H1 (cell line): ENCODE measurements at regions of chr7 and their contacts with region 1.

Region 1: GRCh38 chr7:24741691-24742504 is 15.4 kb downstream of the GSDME start:
- DNase-seq: no peak
- H3K4me3 ChIP-seq: no peak overlapping the region
- H3K27ac ChIP-seq: no peak overlapping the region
- H3K4me1 ChIP-seq: no peaks in the 10 kb centered on the region
- H3K27me3 ChIP-seq: no peaks in the 10 kb centered on the region
- CTCF ChIP-seq: no peak
- EP300 ChIP-seq: no peak
- POLR2A ChIP-seq: no peak
- RAD21 ChIP-seq: no peak

Region 2: DNA sequence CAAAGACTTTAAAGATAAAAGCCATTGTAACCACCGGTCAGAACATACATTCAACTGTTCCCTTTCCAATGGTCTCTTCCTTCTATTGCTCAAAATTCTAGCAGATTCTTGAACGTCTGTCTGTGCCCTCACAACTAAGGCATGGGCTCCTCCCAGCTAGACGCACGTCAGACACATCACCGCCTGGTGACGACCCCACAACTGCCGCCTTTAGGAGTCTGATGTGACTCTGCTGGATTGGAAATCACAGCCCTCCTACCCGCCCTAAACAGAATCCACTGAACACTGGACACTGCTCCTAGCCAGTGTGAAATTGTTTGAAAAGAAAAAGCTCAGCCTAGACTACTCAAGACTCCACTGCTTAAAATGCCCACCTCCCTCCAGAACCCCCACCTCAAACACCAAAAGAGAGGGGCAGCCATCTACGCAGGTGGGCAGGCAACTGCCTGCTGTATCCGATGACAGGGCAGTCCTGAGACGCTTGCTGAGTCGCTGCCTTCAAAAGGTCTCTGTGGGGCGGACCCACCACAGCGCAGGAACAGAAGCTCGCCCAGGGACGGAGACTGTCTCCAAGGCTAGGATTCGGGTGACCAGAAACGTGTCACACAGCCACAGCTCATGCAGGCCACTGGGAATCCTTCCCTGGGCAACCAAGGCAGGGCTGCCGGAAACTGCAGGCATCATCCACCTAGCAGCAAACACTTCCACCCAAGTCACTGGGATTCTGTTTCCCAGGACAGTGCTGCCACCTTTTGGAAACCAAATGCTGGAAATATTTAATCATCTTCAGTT is 19.3 kb before region 1 on chr7:
- CTCF ChIA-PET with region 1: interaction called, 17 read pairs
- POLR2A ChIA-PET with region 1: interaction called, 4 read pairs
- DNase-seq: peak in 1 of 2 experiments; percentile 54
- H3K4me3 ChIP-seq: no peak overlapping the region
- H3K27ac ChIP-seq: no peak overlapping the region
- H3K4me1 ChIP-seq: peaks cover 7 to 24% (median 13%) of the 10 kb centered on the region in 4 experiments
- H3K27me3 ChIP-seq: no peaks in the 10 kb centered on the region; a peak in 1 of 7 replicates
- CTCF ChIP-seq: peak in 2 of 3 experiments; percentile 61 to 64; a peak in 3 of 4 replicates
- EP300 ChIP-seq: no peak
- POLR2A ChIP-seq: no peak
- RAD21 ChIP-seq: peak; percentile 78 to 82